Caco-2 (cell line): ENCODE measurements at regions of chr1 and their contacts with region 1.

Region 1: GRCh38 chr1:172429331-172430127 is 9.0 kb downstream of the C1orf105 start:
- DNase-seq: peak; percentile 45 to 62
- H3K4me3 ChIP-seq: no peak overlapping the region
- H3K4me3 Mint-ChIP-seq: no peak overlapping the region
- H3K27ac Mint-ChIP-seq: no peak overlapping the region
- H3K4me1 ChIP-seq: peaks cover 22% of the 10 kb centered on the region
- H3K4me1 Mint-ChIP-seq: peaks cover 13% of the 10 kb centered on the region
- H3K27me3 ChIP-seq: no peaks in the 10 kb centered on the region
- H3K27me3 Mint-ChIP-seq: no peaks in the 10 kb centered on the region
- CTCF ChIP-seq: peak; percentile 63 to 75

Region 2: GRCh38 chr1:172041742-172042141 is 387.8 kb before region 1 on chr1:
- CTCF ChIA-PET with region 1: no interaction called
- POLR2A ChIA-PET with region 1: no interaction called
- intact Hi-C with region 1: loop called (anchors 1 kb)
- DNase-seq: no peak
- H3K4me3 ChIP-seq: no peak overlapping the region
- H3K4me3 Mint-ChIP-seq: no peak overlapping the region
- H3K27ac Mint-ChIP-seq: no peak overlapping the region
- H3K4me1 ChIP-seq: 0 out of 2 replicates have a peak, but pooled peaks cover 4% of the 10 kb centered on the region
- H3K4me1 Mint-ChIP-seq: no peaks in the 10 kb centered on the region
- H3K27me3 ChIP-seq: no peaks in the 10 kb centered on the region
- H3K27me3 Mint-ChIP-seq: peaks cover 6% of the 10 kb centered on the region
- CTCF ChIP-seq: peak; percentile 37 to 46

Region 3: GRCh38 chr1:172405912-172406311 is 23.6 kb before region 1 on chr1:
- CTCF ChIA-PET with region 1: no interaction called
- POLR2A ChIA-PET with region 1: no interaction called
- intact Hi-C with region 1: loop called (anchors 2 kb)
- DNase-seq: no peak
- H3K4me3 ChIP-seq: no peak overlapping the region
- H3K4me3 Mint-ChIP-seq: no peak overlapping the region
- H3K27ac Mint-ChIP-seq: no peak overlapping the region
- H3K4me1 ChIP-seq: no peaks in the 10 kb centered on the region
- H3K4me1 Mint-ChIP-seq: no peaks in the 10 kb centered on the region
- H3K27me3 ChIP-seq: no peaks in the 10 kb centered on the region
- H3K27me3 Mint-ChIP-seq: no peaks in the 10 kb centered on the region
- CTCF ChIP-seq: no peak

Region 4: DNA sequence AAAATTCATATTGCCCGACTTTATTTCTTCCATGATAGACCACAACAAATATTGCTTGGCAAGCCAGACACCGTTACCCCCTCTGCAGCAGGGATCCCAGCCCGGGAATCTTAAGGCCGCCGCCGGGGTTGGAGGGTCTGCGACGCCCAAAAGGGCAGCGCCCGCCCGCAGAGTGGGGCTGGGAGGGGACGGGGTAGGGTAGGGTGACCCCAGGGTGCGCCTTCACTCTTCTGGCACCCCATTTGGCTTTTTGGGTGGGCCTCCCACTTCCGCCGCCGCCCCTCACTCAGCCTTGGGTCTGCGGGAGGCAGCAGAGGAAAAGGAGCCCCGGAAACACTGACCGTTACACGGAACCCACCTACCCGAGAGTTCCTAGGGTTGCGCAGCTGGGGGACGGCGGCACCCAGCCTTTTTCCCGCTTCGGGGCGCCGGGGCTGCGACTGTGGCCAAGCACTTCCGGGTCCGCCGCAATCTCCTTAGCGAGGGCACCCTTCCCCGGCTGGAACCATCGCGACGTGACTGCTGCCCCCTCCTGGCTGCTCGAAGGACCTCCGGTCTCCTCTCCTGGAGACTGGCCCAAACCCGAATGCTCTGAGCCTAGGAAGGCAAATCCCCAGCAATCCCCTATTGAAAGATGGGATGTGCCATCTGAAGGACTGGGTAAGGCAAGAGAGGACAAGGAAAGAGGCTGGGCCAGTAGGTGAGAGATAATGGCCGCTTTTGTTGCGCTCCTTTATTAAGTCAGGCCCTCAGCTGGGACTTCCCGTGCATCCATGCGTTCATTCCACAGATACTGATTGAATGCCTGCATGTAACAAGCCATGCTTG is 14.3 kb after region 1 on chr1 and contains the start of gene PIGC:
- CTCF ChIA-PET with region 1: interaction called, 10 read pairs
- POLR2A ChIA-PET with region 1: no interaction called
- intact Hi-C with region 1: loop called (anchors 1 kb)
- DNase-seq: peak; percentile 90 to 93
- H3K4me3 ChIP-seq: peak within 1 kb of the TSS; percentile 93
- H3K4me3 Mint-ChIP-seq: peak within 1 kb of the TSS; percentile 77
- H3K27ac Mint-ChIP-seq: peak within 1 kb of the TSS; percentile 87
- H3K4me1 ChIP-seq: peaks cover 31% of the 10 kb centered on the region
- H3K4me1 Mint-ChIP-seq: peaks cover 25% of the 10 kb centered on the region
- H3K27me3 ChIP-seq: no peaks in the 10 kb centered on the region
- H3K27me3 Mint-ChIP-seq: no peaks in the 10 kb centered on the region
- CTCF ChIP-seq: peak; percentile 87 to 88
- total RNA-seq, gene PIGC: 23.7 and 26.1 TPM in 2 replicates

Region 5: DNA sequence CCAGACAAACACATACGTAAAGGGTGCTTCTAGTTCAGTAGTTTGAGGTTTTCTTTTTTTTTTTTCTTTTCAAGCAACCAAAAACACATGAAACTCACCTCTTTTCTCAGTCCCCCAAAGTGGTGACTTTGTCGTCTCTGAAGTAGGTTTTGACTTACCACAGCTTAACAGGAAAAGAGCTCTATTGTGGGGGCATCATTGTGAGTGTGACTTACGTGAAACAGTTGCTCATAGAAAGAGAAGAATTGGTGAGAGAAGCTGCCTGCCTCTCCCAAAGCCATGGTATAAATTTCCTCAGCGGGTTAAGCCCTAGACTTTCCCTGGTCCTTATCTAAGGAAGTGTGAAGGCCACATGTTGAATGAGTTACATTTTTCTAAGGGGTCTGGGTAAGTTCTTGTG is 241.3 kb after region 1 on chr1:
- CTCF ChIA-PET with region 1: no interaction called
- POLR2A ChIA-PET with region 1: no interaction called
- intact Hi-C with region 1: no loop called
- DNase-seq: no peak
- H3K4me3 ChIP-seq: no peak overlapping the region
- H3K4me3 Mint-ChIP-seq: no peak overlapping the region
- H3K27ac Mint-ChIP-seq: no peak overlapping the region
- H3K4me1 ChIP-seq: peaks cover 14% of the 10 kb centered on the region; the same call in 1 of the 2 replicates
- H3K4me1 Mint-ChIP-seq: peaks cover 7% of the 10 kb centered on the region
- H3K27me3 ChIP-seq: no peaks in the 10 kb centered on the region
- H3K27me3 Mint-ChIP-seq: no peaks in the 10 kb centered on the region
- CTCF ChIP-seq: no peak

Region 6: DNA sequence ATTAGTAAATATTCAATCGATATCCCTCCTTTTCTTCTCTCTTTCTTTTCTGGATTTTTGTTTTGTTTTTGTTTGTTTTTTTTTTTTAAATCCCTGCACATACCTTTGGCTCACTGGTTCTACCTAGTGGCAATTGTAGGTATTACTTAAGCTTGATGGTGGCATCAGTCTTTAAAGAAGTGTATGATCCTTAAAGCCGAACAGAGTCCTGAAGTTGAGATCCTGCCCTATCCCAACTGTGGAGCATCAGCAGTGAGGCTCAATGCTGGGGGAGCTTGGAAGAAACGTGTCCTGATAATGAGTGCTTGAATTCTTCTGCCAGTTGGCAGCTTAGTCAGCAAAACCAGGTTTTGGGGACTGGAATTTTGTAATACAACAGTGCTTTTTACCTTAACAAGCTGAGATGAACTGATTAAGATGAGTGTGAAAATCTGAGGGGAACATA is 290.2 kb after region 1 on chr1:
- CTCF ChIA-PET with region 1: no interaction called
- POLR2A ChIA-PET with region 1: no interaction called
- intact Hi-C with region 1: loop called (anchors 1 kb)
- DNase-seq: peak in 1 of 2 experiments; percentile 60
- H3K4me3 ChIP-seq: no peak overlapping the region
- H3K4me3 Mint-ChIP-seq: no peak overlapping the region
- H3K27ac Mint-ChIP-seq: no peak overlapping the region
- H3K4me1 ChIP-seq: peaks cover 7% of the 10 kb centered on the region; the same call in 1 of the 2 replicates
- H3K4me1 Mint-ChIP-seq: peaks cover 20% of the 10 kb centered on the region
- H3K27me3 ChIP-seq: no peaks in the 10 kb centered on the region
- H3K27me3 Mint-ChIP-seq: no peaks in the 10 kb centered on the region
- CTCF ChIP-seq: peak; percentile 74 to 77